ENCODE measurements at regions of chr6 and their contacts with region 1.

Region 1: GRCh38 chr6:52826513-52826912 is 14.1 kb downstream of the GSTA5 start:
- DNase-seq: no peak
- H3K4me3 ChIP-seq: no peak overlapping the region
- H3K27ac ChIP-seq: no peak overlapping the region
- H3K4me1 ChIP-seq: no peaks in the 10 kb centered on the region
- H3K27me3 ChIP-seq: peaks cover 7% of the 10 kb centered on the region
- CTCF ChIP-seq: no peak

Region 2: GRCh38 chr6:52787917-52788316 is 38.6 kb before region 1 on chr6:
- intact Hi-C with region 1: loop called (anchors 2 kb)
- DNase-seq: no peak
- H3K4me3 ChIP-seq: no peak overlapping the region
- H3K27ac ChIP-seq: no peak overlapping the region
- H3K4me1 ChIP-seq: no peaks in the 10 kb centered on the region
- H3K27me3 ChIP-seq: no peaks in the 10 kb centered on the region
- CTCF ChIP-seq: no peak

Measured in left ventricle myocardium inferior (tissue), 1 donor.